ENCODE measurements at regions of chr1 and their contacts with region 1.

Region 1: GRCh38 chr1:99766378-99766800 is at the start of gene FRRS1:
- DNase-seq: peak; percentile 87
- H3K4me3 Mint-ChIP-seq: peak within 1 kb of the TSS; percentile 97
- H3K27ac Mint-ChIP-seq: peak within 1 kb of the TSS; percentile 98
- H3K4me1 Mint-ChIP-seq: peaks cover 19% of the 10 kb centered on the region
- H3K27me3 Mint-ChIP-seq: no peaks in the 10 kb centered on the region
- CTCF ChIP-seq: no peak
- total RNA-seq, gene FRRS1: 7.2 and 7.4 TPM in 2 replicates

Region 2: GRCh38 chr1:99580451-99580850 is 185.9 kb before region 1 on chr1:
- CTCF ChIA-PET with region 1: no interaction called
- POLR2A ChIA-PET with region 1: no interaction called
- intact Hi-C with region 1: no loop called
- DNase-seq: peak; percentile 90
- H3K4me3 Mint-ChIP-seq: peak overlapping the region; percentile 33
- H3K27ac Mint-ChIP-seq: peak overlapping the region; percentile 96
- H3K4me1 Mint-ChIP-seq: peaks cover 20% of the 10 kb centered on the region
- H3K27me3 Mint-ChIP-seq: no peaks in the 10 kb centered on the region
- CTCF ChIP-seq: no peak

Region 3: GRCh38 chr1:99849744-99850458 is 83.5 kb after region 1 on chr1 and contains the start of gene AGL:
- CTCF ChIA-PET with region 1: interaction called, 5 read pairs
- POLR2A ChIA-PET with region 1: interaction called, 22 read pairs
- intact Hi-C with region 1: no loop called
- DNase-seq: peak; percentile 84
- H3K4me3 Mint-ChIP-seq: peak within 1 kb of the TSS; percentile 93
- H3K27ac Mint-ChIP-seq: peak within 1 kb of the TSS; percentile 85
- H3K4me1 Mint-ChIP-seq: peaks cover 14% of the 10 kb centered on the region
- H3K27me3 Mint-ChIP-seq: no peaks in the 10 kb centered on the region
- CTCF ChIP-seq: no peak
- total RNA-seq, gene AGL: 8.9 and 9.1 TPM in 2 replicates